Panc1 (cell line): ENCODE measurements at regions of chr13 and their contacts with region 1.

Region 1: GRCh38 chr13:75038393-75039113 is 443.4 kb downstream of the TBC1D4 start:
- DNase-seq: no peak
- ATAC-seq: no peak
- H3K4me3 ChIP-seq: no peak overlapping the region
- H3K27ac ChIP-seq: no peak overlapping the region
- H3K4me1 ChIP-seq: no peaks in the 10 kb centered on the region
- H3K27me3 ChIP-seq: no peaks in the 10 kb centered on the region
- CTCF ChIP-seq: no peak

Region 2: DNA sequence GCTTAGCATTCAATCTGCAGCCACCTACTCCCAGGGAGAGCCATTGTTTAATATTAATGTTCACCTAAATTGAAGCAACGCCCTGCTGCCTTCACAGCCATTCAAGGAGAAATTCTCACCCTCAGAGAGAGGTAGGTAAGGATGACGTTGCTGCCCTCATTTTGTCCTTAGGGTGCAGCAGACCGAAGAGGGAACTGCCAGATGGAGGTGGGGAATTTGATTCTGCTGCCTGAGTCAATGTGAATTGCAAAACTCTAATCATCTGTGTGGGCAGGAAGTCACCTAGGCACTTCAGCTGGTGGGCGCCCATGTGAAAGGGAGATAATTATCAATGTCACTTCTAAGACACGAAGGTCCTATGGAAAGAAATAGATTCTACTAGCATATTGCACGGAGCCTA is 60.0 kb before region 1 on chr13:
- CTCF ChIA-PET with region 1: no interaction called
- POLR2A ChIA-PET with region 1: no interaction called
- in situ Hi-C with region 1: no loop called
- intact Hi-C with region 1: loop called (anchors 2 kb)
- DNase-seq: no peak
- ATAC-seq: no peak
- H3K4me3 ChIP-seq: no peak overlapping the region
- H3K27ac ChIP-seq: no peak overlapping the region
- H3K4me1 ChIP-seq: no peaks in the 10 kb centered on the region
- H3K27me3 ChIP-seq: no peaks in the 10 kb centered on the region
- CTCF ChIP-seq: no peak

Region 3: DNA sequence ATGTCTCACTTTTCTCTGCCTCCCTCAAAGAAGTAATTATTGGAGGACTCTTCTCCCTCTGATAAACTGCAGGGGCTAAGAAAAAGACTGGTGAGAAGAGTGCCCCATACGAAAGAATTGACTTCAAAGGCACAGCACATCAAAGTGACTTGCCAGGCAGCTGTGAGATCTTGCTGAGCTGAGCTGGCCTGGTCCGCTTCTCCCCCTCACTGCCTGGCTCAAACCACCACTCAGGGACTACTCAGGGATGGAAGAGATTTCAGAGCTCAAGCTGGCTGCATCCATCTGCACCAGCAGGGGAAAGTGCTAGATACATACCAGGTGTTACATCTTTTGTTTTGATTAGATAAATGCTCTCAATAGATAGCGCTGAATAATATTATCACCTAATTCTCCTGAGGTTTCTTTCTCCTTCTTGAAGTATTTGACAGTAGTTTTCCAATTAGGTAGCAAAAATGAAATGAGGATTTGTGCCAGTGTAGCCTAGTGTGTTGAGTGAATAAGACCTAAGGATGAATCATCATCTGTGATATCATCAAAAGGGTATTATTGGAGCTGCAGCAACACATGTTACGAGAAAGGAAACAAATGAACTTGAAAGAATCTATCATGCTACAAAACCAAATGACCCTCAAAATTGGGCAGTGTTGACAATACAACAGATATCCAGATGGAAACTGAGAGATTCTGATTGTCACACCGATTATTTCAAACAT is 63.6 kb after region 1 on chr13:
- CTCF ChIA-PET with region 1: no interaction called
- POLR2A ChIA-PET with region 1: no interaction called
- in situ Hi-C with region 1: no loop called
- intact Hi-C with region 1: no loop called
- DNase-seq: no peak
- ATAC-seq: no peak
- H3K4me3 ChIP-seq: no peak overlapping the region
- H3K27ac ChIP-seq: no peak overlapping the region
- H3K4me1 ChIP-seq: no peaks in the 10 kb centered on the region
- H3K27me3 ChIP-seq: no peaks in the 10 kb centered on the region
- CTCF ChIP-seq: no peak